Naive thymus-derived CD4-positive, alpha-beta T cell (primary cell): ENCODE measurements at regions of chr13 and their contacts with region 1.

Region 1: GRCh38 chr13:102845630-102846260 is at the start of gene ERCC5:
- DNase-seq: peak; percentile 93 to 99 (median 97)
- ATAC-seq: peak; percentile 89
- H3K4me3 ChIP-seq: peak within 1 kb of the TSS; percentile 98
- H3K4me3 Mint-ChIP-seq: peak within 1 kb of the TSS; percentile 86 to 100 (median 96)
- H3K27ac ChIP-seq: peak within 1 kb of the TSS; percentile 97
- H3K27ac Mint-ChIP-seq: peak within 1 kb of the TSS; percentile 93 to 100 (median 99)
- H3K4me1 ChIP-seq: peaks cover 19 to 34% of the 10 kb centered on the region in 2 donors
- H3K4me1 Mint-ChIP-seq: peaks cover 31 to 52% (median 42%) of the 10 kb centered on the region in 7 donors
- H3K27me3 ChIP-seq: no peaks in the 10 kb centered on the region
- H3K27me3 Mint-ChIP-seq: peaks cover 0 to 4% (median 0%) of the 10 kb centered on the region in 5 donors
- total RNA-seq, gene ERCC5: 79.6 to 158 (median 123) TPM

Region 2: GRCh38 chr13:101144808-101145419 is 1700.8 kb before region 1 on chr13:
- CTCF ChIA-PET with region 1: no interaction called
- POLR2A ChIA-PET with region 1: no interaction called
- intact Hi-C with region 1: loop called (anchors 5 kb)
- DNase-seq: peak in 7 of 9 donors; percentile 17 to 48 (median 33)
- ATAC-seq: peak; percentile 63
- H3K4me3 ChIP-seq: no peak overlapping the region
- H3K4me3 Mint-ChIP-seq: no peak overlapping the region
- H3K27ac ChIP-seq: no peak overlapping the region
- H3K27ac Mint-ChIP-seq: no peak overlapping the region
- H3K4me1 ChIP-seq: no peaks in the 10 kb centered on the region
- H3K4me1 Mint-ChIP-seq: no peaks in the 10 kb centered on the region
- H3K27me3 ChIP-seq: no peaks in the 10 kb centered on the region
- H3K27me3 Mint-ChIP-seq: peaks cover 7 to 48% (median 40%) of the 10 kb centered on the region in 5 donors

Region 3: GRCh38 chr13:102255409-102255808 is 590.3 kb before region 1 on chr13:
- CTCF ChIA-PET with region 1: no interaction called
- POLR2A ChIA-PET with region 1: no interaction called
- intact Hi-C with region 1: no loop called
- DNase-seq: no peak
- ATAC-seq: no peak
- H3K4me3 ChIP-seq: no peak overlapping the region
- H3K4me3 Mint-ChIP-seq: no peak overlapping the region
- H3K27ac ChIP-seq: no peak overlapping the region
- H3K27ac Mint-ChIP-seq: no peak overlapping the region
- H3K4me1 ChIP-seq: no peaks in the 10 kb centered on the region
- H3K4me1 Mint-ChIP-seq: peaks cover 0 to 5% (median 0%) of the 10 kb centered on the region in 7 donors
- H3K27me3 ChIP-seq: no peaks in the 10 kb centered on the region
- H3K27me3 Mint-ChIP-seq: peaks cover 0 to 12% (median 6%) of the 10 kb centered on the region in 5 donors

Region 4: DNA sequence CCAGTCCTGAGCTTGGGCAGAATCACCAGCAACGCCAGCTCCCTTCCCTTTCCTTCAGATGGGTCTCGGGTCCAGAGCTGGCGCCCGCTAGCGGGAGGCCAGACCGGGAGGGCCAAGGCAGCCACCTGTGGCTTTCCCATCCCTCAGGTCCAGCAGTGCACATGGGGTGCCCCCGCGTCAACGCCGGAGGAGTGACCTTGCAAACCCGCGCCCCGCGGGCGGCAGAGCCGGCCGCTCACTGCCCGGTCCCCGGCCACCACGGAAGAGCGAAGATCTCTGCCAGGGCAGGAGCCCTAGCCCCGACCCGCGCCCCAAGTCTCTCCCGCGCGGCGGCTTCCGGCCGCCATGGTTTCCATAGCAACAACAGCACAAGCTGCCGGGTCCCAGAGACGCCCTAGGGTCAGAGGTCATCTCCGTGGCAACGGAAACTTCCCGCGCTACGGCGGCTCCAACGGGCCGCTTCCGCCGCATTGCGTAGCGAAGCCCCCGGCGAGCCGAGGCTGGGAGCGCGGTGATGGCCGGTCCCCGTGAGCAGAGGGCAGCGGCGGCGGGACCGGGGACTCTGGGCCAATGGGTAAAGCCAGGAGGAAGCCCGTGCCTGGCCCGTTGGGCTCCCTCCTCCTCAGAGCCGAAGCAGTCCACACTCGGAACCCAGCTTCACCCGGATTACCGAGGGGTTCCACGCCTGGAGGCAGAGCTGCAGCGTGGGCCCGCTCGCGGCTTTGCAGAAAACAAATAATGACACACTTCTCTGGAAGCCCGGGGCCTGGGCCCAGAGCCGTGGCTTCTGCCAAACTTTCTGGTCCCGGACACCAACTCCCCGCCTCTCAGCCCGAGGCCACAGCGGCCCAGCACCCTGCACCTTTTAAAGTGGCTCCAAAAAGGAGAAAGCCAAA is 451.3 kb before region 1 on chr13:
- CTCF ChIA-PET with region 1: interaction called, 3 read pairs
- POLR2A ChIA-PET with region 1: interaction called, 5 read pairs
- intact Hi-C with region 1: loop called (anchors 1 kb)
- DNase-seq: peak; percentile 91 to 98 (median 95)
- ATAC-seq: peak; percentile 94
- H3K4me3 ChIP-seq: peak overlapping the region; percentile 96
- H3K4me3 Mint-ChIP-seq: peak overlapping the region; percentile 85 to 93 (median 90)
- H3K27ac ChIP-seq: peak overlapping the region; percentile 78
- H3K27ac Mint-ChIP-seq: peak overlapping the region in 8 of 9 donors; percentile 82 to 94 (median 88)
- H3K4me1 ChIP-seq: peaks cover 0 to 12% of the 10 kb centered on the region in 2 donors
- H3K4me1 Mint-ChIP-seq: peaks cover 6 to 25% (median 20%) of the 10 kb centered on the region in 7 donors
- H3K27me3 ChIP-seq: no peaks in the 10 kb centered on the region
- H3K27me3 Mint-ChIP-seq: peaks cover 13 to 41% (median 22%) of the 10 kb centered on the region in 5 donors

Region 5: GRCh38 chr13:102651892-102652291 is 193.9 kb before region 1 on chr13:
- CTCF ChIA-PET with region 1: no interaction called
- POLR2A ChIA-PET with region 1: no interaction called
- intact Hi-C with region 1: loop called (anchors 5 kb)
- DNase-seq: no peak
- ATAC-seq: no peak
- H3K4me3 ChIP-seq: no peak overlapping the region
- H3K4me3 Mint-ChIP-seq: no peak overlapping the region
- H3K27ac ChIP-seq: no peak overlapping the region
- H3K27ac Mint-ChIP-seq: no peak overlapping the region
- H3K4me1 ChIP-seq: no peaks in the 10 kb centered on the region
- H3K4me1 Mint-ChIP-seq: peaks cover 0 to 10% (median 7%) of the 10 kb centered on the region in 7 donors
- H3K27me3 ChIP-seq: no peaks in the 10 kb centered on the region
- H3K27me3 Mint-ChIP-seq: no peaks in the 10 kb centered on the region

Region 6: DNA sequence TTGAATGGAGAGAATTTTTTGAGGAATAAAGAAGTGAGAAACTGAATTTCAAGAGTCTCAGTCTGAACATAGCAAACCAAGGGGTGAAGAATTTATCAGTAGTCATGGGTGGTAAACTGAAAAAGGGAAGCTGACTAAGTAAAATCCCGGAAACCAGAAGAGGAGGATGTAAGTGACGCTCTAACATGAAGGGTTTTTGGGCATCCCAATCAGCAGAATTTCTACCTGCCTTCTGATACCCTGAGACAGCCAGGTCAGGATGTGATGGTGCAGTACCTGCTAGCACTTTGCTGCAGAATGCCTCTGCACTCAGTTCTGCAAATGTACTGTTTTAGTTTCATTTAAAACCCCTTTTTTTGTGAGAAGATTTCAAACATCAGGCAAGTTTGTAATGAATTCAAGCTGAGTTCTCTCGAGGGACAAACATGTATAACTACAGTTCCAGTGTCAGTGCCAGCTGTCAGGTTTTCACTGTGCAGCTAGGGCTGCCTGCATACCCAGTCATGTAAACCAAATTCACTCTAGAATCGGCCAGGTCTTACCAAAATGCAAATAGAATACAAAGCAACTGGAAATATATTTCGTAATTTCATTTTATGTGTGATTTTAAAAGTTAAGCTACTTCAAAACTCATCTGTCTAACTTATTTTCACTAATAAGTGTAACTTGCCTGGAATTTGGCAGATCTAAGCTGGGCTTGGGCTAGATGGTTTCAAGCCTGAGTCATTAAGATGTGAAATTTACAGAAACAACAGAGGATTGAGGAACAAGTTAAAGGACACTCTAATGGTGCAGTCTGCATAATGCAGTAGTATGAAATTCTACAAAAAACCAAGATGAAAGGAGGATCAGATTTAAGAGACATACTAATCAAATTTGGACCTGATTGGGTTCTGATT is 164.7 kb before region 1 on chr13:
- CTCF ChIA-PET with region 1: no interaction called
- POLR2A ChIA-PET with region 1: interaction called, 4 read pairs
- intact Hi-C with region 1: loop called (anchors 5 kb)
- DNase-seq: peak in 5 of 9 donors; percentile 2 to 37 (median 34)
- ATAC-seq: peak; percentile 74
- H3K4me3 ChIP-seq: no peak overlapping the region
- H3K4me3 Mint-ChIP-seq: peak overlapping the region in 2 of 10 donors; percentile 5 to 57
- H3K27ac ChIP-seq: no peak overlapping the region
- H3K27ac Mint-ChIP-seq: peak overlapping the region; percentile 14 to 81 (median 58)
- H3K4me1 ChIP-seq: peaks cover 0 to under 1% of the 10 kb centered on the region in 2 donors
- H3K4me1 Mint-ChIP-seq: peaks cover 14 to 33% (median 21%) of the 10 kb centered on the region in 7 donors
- H3K27me3 ChIP-seq: no peaks in the 10 kb centered on the region
- H3K27me3 Mint-ChIP-seq: no peaks in the 10 kb centered on the region

Region 7: DNA sequence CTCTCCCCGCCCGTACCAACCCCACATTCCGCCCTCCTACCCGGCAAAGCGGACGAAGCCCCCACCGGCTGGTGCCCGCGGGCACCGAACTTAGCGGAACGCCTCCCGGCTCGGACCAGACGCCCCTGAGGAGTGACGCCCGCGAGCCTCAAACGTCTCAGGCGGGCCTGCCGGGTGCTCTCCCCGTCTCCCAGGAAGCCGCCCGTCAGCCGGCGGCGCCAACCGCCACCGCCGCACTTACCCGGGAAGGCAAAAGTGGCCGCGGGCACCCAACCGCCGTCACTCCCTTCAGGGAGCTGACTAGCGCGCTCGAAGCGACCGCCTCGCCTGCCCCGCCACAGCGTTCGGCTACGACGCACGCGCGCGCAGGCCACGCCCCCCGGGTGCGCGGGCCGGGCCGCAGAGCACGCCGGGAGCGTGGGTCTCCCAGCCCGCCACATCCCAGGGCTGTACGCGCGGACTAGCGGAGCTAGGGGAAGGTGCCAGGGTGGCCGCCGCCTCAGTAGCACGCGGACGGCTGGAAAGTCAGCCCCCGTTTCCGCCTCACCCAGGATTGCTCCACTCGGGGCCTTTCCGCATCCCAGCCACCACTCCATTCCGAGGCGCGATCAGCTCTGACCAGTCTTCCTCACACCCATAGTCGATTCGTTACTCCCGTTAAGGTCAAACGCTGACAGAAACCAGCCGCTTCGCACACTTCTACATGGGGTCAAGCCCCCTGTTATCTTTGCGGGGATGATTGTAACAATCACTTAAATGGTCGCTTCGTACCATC is 72.1 kb before region 1 on chr13 and contains the start of gene TEX30:
- CTCF ChIA-PET with region 1: interaction called, 3 read pairs
- POLR2A ChIA-PET with region 1: interaction called, 51 read pairs
- intact Hi-C with region 1: loop called (anchors 1 kb)
- DNase-seq: peak; percentile 78 to 95 (median 91)
- ATAC-seq: peak; percentile 98
- H3K4me3 ChIP-seq: peak within 1 kb of the TSS; percentile 89
- H3K4me3 Mint-ChIP-seq: peak within 1 kb of the TSS; percentile 87 to 97 (median 94)
- H3K27ac ChIP-seq: peak within 1 kb of the TSS; percentile 79
- H3K27ac Mint-ChIP-seq: peak within 1 kb of the TSS; percentile 87 to 97 (median 94)
- H3K4me1 ChIP-seq: peaks cover 2 to 7% of the 10 kb centered on the region in 2 donors
- H3K4me1 Mint-ChIP-seq: peaks cover 15 to 56% (median 46%) of the 10 kb centered on the region in 7 donors
- H3K27me3 ChIP-seq: no peaks in the 10 kb centered on the region
- H3K27me3 Mint-ChIP-seq: no peaks in the 10 kb centered on the region
- total RNA-seq, gene TEX30: 3.7 to 30.8 (median 8.3) TPM

Region 8: DNA sequence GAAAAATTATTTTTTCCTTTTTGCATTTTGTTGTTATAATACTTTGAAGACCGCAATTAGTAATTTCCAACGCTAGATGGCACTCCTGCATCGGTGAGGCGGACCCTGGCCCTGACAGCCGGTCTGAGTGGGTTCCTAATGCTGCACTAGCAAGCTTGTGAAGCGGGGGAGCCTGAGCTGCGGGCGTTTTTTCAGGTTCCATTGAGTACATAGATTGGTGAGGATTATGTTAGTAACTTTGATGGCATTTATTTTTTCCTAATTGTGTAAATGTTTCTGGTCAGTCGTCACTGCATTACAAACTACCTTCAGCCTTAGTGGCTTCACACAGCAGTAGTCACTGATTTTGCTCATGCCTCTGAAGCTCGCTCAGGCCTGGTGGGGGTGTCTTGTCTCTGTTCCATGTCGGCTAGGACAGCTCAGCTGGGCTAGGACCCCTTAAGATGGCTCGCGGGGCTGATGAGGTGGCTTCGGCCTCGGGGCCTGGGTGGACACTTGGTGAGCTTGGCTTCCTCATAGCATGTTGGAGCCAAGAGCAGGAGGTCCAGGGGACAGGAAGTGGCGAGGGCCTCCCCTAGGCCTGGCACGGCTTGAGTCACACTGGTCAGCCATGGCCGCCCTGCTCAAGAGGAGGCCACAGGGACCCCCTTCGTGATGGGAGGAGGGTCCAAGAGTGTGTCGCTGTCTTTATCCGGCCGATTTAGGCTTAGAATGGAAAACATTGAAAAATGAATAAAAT is 25.1 kb after region 1 on chr13:
- CTCF ChIA-PET with region 1: interaction called, 3 read pairs
- POLR2A ChIA-PET with region 1: interaction called, 3 read pairs
- intact Hi-C with region 1: loop called in 1 of 2 experiments (anchors 2 kb)
- DNase-seq: peak in 6 of 9 donors; percentile 27 to 51 (median 46)
- ATAC-seq: peak; percentile 77
- H3K4me3 ChIP-seq: no peak overlapping the region
- H3K4me3 Mint-ChIP-seq: no peak overlapping the region
- H3K27ac ChIP-seq: no peak overlapping the region
- H3K27ac Mint-ChIP-seq: peak overlapping the region in 7 of 9 donors; percentile 21 to 87 (median 36)
- H3K4me1 ChIP-seq: no peaks in the 10 kb centered on the region
- H3K4me1 Mint-ChIP-seq: peaks cover 11 to 31% (median 25%) of the 10 kb centered on the region in 7 donors
- H3K27me3 ChIP-seq: no peaks in the 10 kb centered on the region
- H3K27me3 Mint-ChIP-seq: no peaks in the 10 kb centered on the region

Region 9: GRCh38 chr13:103157016-103157415 is 311.3 kb after region 1 on chr13:
- CTCF ChIA-PET with region 1: no interaction called
- POLR2A ChIA-PET with region 1: no interaction called
- intact Hi-C with region 1: no loop called
- DNase-seq: no peak
- ATAC-seq: no peak
- H3K4me3 ChIP-seq: no peak overlapping the region
- H3K4me3 Mint-ChIP-seq: no peak overlapping the region
- H3K27ac ChIP-seq: no peak overlapping the region
- H3K27ac Mint-ChIP-seq: no peak overlapping the region
- H3K4me1 ChIP-seq: no peaks in the 10 kb centered on the region
- H3K4me1 Mint-ChIP-seq: no peaks in the 10 kb centered on the region
- H3K27me3 ChIP-seq: no peaks in the 10 kb centered on the region
- H3K27me3 Mint-ChIP-seq: peaks cover 0 to 15% (median 5%) of the 10 kb centered on the region in 5 donors